ENCODE measurements at regions of chr12 and their contacts with region 1.

Region 1: GRCh38 chr12:111024205-111024801 is 103.9 kb upstream of the MYL2 start:
- DNase-seq: peak; percentile 27 to 68 (median 42)
- ATAC-seq: peak; percentile 44
- H3K4me3 ChIP-seq: no peak overlapping the region
- H3K4me3 Mint-ChIP-seq: no peak overlapping the region
- H3K27ac ChIP-seq: no peak overlapping the region
- H3K27ac Mint-ChIP-seq: no peak overlapping the region
- H3K4me1 ChIP-seq: peaks cover 8% of the 10 kb centered on the region
- H3K4me1 Mint-ChIP-seq: no peaks in the 10 kb centered on the region
- H3K27me3 ChIP-seq: peaks cover 0 to 13% of the 10 kb centered on the region in 2 experiments
- H3K27me3 Mint-ChIP-seq: peaks cover 49% of the 10 kb centered on the region
- CTCF ChIP-seq: peak; percentile 78

Region 2: GRCh38 chr12:110972866-110973265 is 51.4 kb before region 1 on chr12:
- CTCF ChIA-PET with region 1: no interaction called
- POLR2A ChIA-PET with region 1: no interaction called
- intact Hi-C with region 1: no loop called
- DNase-seq: no peak
- ATAC-seq: no peak
- H3K4me3 ChIP-seq: no peak overlapping the region
- H3K4me3 Mint-ChIP-seq: no peak overlapping the region
- H3K27ac ChIP-seq: no peak overlapping the region
- H3K27ac Mint-ChIP-seq: no peak overlapping the region
- H3K4me1 ChIP-seq: no peaks in the 10 kb centered on the region
- H3K4me1 Mint-ChIP-seq: no peaks in the 10 kb centered on the region
- H3K27me3 ChIP-seq: no peaks in the 10 kb centered on the region
- H3K27me3 Mint-ChIP-seq: no peaks in the 10 kb centered on the region
- CTCF ChIP-seq: no peak

Region 3: GRCh38 chr12:110983806-110984205 is 40.5 kb before region 1 on chr12:
- CTCF ChIA-PET with region 1: no interaction called
- POLR2A ChIA-PET with region 1: no interaction called
- intact Hi-C with region 1: no loop called
- DNase-seq: no peak
- ATAC-seq: no peak
- H3K4me3 ChIP-seq: no peak overlapping the region
- H3K4me3 Mint-ChIP-seq: no peak overlapping the region
- H3K27ac ChIP-seq: no peak overlapping the region
- H3K27ac Mint-ChIP-seq: no peak overlapping the region
- H3K4me1 ChIP-seq: no peaks in the 10 kb centered on the region
- H3K4me1 Mint-ChIP-seq: no peaks in the 10 kb centered on the region
- H3K27me3 ChIP-seq: no peaks in the 10 kb centered on the region
- H3K27me3 Mint-ChIP-seq: peaks cover 45% of the 10 kb centered on the region
- CTCF ChIP-seq: no peak

Region 4: DNA sequence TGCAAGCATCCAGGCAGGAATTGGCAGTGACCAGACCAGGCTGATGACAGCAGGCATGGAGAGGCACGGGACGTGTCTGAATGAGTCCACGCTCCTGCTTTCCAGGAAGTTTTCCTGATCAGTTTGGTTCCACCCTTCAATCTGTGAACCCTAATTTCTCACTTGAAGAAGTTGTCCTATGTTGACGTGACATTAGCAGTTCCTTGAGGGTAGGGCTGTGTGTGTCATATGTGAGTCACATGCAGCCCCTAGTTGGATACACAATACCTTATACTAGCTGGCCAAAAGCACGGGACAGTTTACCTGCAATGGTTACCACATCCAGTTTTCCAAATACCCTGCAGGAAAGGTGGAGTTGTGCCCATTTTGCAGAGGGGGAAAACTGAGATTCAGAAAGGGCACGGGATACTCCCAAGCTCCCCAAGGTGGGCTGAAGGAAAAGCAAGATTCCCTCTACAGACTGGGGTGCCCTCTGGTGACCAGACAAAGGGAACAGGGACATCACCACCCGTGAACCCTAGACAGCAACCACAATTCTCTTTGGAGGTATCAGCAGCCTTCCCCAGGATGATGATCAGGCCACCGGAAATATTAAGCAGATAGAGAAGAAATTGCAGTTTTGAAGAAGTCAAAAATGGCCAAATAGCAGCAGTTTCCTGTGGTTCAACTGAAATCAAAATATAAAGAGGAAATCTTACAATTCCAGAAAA is 150.1 kb after region 1 on chr12:
- CTCF ChIA-PET with region 1: no interaction called
- POLR2A ChIA-PET with region 1: no interaction called
- intact Hi-C with region 1: loop called (anchors 1 kb)
- DNase-seq: peak in 3 of 14 experiments; percentile 10 to 38 (median 31)
- ATAC-seq: no peak
- H3K4me3 ChIP-seq: no peak overlapping the region
- H3K4me3 Mint-ChIP-seq: no peak overlapping the region
- H3K27ac ChIP-seq: no peak overlapping the region
- H3K27ac Mint-ChIP-seq: no peak overlapping the region
- H3K4me1 ChIP-seq: peaks cover 3% of the 10 kb centered on the region
- H3K4me1 Mint-ChIP-seq: no peaks in the 10 kb centered on the region
- H3K27me3 ChIP-seq: peaks cover 0 to 11% of the 10 kb centered on the region in 2 experiments
- H3K27me3 Mint-ChIP-seq: peaks cover 39% of the 10 kb centered on the region
- CTCF ChIP-seq: peak; percentile 30

Region 5: DNA sequence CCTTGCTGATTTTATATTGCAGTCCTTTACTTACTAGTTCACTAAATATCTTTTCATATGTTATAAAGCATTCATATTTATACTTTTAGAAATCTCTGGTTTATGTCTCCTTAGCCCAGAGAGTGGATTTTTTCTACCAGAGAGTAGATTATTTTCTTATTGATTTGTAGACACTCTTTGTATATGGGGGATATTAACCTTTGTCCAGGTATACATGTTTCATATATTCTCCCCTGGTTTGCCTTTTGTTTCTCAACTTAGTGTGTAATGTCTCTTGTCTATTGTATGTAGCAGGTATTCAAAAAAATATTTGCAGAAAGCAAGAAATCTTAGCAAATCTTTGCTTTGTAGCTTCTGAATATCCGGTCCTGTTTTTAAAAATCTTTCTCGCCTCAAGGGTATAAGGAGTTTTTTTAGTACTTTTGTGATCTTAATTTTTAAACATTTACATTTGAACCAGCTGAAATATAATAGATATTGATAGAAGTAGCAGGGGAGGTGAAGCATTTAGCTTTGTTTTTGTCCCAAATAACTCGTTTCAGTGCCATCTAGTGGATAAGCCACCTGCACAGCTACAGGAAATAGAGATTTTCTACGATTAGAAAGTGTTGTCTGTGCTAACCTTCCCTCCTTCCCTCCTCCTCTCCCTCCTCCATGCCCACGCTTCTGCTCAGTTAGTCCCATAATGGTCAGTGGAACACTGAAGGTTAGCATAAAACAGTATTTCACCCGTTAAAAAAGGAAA is 247.5 kb after region 1 on chr12:
- CTCF ChIA-PET with region 1: no interaction called
- POLR2A ChIA-PET with region 1: no interaction called
- intact Hi-C with region 1: loop called (anchors 1 to 2 kb)
- DNase-seq: peak in 4 of 14 experiments; percentile 6 to 22 (median 16)
- ATAC-seq: no peak
- H3K4me3 ChIP-seq: no peak overlapping the region
- H3K4me3 Mint-ChIP-seq: no peak overlapping the region
- H3K27ac ChIP-seq: no peak overlapping the region
- H3K27ac Mint-ChIP-seq: no peak overlapping the region
- H3K4me1 ChIP-seq: no peaks in the 10 kb centered on the region
- H3K4me1 Mint-ChIP-seq: no peaks in the 10 kb centered on the region
- H3K27me3 ChIP-seq: peaks cover 0 to 4% of the 10 kb centered on the region in 2 experiments
- H3K27me3 Mint-ChIP-seq: peaks cover 13% of the 10 kb centered on the region
- CTCF ChIP-seq: peak; percentile 14

Region 6: GRCh38 chr12:111298582-111299436 is 274.5 kb after region 1 on chr12:
- CTCF ChIA-PET with region 1: no interaction called
- POLR2A ChIA-PET with region 1: no interaction called
- intact Hi-C with region 1: loop called (anchors 1 to 5 kb)
- DNase-seq: peak; percentile 13 to 63 (median 34)
- ATAC-seq: peak; percentile 41
- H3K4me3 ChIP-seq: no peak overlapping the region
- H3K4me3 Mint-ChIP-seq: no peak overlapping the region
- H3K27ac ChIP-seq: no peak overlapping the region
- H3K27ac Mint-ChIP-seq: no peak overlapping the region
- H3K4me1 ChIP-seq: no peaks in the 10 kb centered on the region
- H3K4me1 Mint-ChIP-seq: no peaks in the 10 kb centered on the region
- H3K27me3 ChIP-seq: peaks cover 0 to 2% of the 10 kb centered on the region in 2 experiments
- H3K27me3 Mint-ChIP-seq: peaks cover 4% of the 10 kb centered on the region
- CTCF ChIP-seq: peak; percentile 53

Region 7: DNA sequence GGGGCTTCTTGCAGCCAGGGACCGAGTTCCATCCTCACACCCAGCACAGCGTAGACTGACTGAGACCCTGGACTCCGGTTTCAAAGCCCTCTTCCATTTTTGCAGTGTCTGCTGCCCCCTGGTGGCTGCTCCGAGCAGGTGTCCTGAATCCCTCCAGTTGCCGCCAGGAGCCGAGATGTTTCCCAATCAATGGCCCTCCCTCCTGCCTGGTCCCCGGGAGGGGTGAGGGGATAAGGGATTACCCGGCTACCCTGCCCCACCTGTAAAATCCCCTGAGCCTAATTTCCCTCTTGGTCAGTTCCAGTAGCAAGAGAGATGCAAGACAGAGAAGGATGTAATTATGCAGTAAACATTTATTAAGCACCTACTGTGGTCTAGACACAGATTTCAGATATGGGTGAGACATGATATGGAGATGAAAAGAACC is 289.5 kb after region 1 on chr12:
- CTCF ChIA-PET with region 1: no interaction called
- POLR2A ChIA-PET with region 1: no interaction called
- intact Hi-C with region 1: loop called (anchors 1 to 2 kb)
- DNase-seq: peak; percentile 55 to 83 (median 69)
- ATAC-seq: peak; percentile 54
- H3K4me3 ChIP-seq: no peak overlapping the region
- H3K4me3 Mint-ChIP-seq: no peak overlapping the region
- H3K27ac ChIP-seq: no peak overlapping the region
- H3K27ac Mint-ChIP-seq: no peak overlapping the region
- H3K4me1 ChIP-seq: peaks cover 8% of the 10 kb centered on the region
- H3K4me1 Mint-ChIP-seq: peaks cover 12% of the 10 kb centered on the region
- H3K27me3 ChIP-seq: no peaks in the 10 kb centered on the region
- H3K27me3 Mint-ChIP-seq: peaks cover 17% of the 10 kb centered on the region
- CTCF ChIP-seq: peak; percentile 92